GM12878 (cell line): ENCODE measurements at regions of chr10 and their contacts with region 1.

Region 1: DNA sequence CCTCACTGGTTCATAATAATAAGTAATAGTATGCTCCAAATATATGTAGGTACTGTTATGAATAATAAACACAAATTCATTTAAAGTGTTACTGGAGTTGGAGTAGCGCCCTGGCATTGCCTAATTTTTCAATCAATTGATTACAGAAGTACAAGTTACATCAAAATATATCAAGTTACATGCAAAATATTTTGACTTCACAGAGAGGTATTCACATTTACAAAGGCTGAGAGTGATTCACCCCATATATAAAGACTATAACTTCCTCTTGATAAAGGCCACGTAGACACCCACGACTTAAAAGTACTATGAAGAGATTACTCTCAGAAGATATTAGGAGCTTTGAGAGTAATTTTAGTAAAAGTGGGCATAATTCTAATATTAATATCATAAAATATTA is 13.6 kb upstream of the COL17A1 start:
- DNase-seq: no peak
- ATAC-seq: no peak
- H3K4me3 ChIP-seq: no peak overlapping the region
- H3K27ac ChIP-seq: no peak overlapping the region
- H3K4me1 ChIP-seq: no peaks in the 10 kb centered on the region
- H3K27me3 ChIP-seq: no peaks in the 10 kb centered on the region
- CTCF ChIP-seq: no peak
- EP300 ChIP-seq: no peak
- POLR2A ChIP-seq: no peak
- RAD21 ChIP-seq: no peak

Region 2: DNA sequence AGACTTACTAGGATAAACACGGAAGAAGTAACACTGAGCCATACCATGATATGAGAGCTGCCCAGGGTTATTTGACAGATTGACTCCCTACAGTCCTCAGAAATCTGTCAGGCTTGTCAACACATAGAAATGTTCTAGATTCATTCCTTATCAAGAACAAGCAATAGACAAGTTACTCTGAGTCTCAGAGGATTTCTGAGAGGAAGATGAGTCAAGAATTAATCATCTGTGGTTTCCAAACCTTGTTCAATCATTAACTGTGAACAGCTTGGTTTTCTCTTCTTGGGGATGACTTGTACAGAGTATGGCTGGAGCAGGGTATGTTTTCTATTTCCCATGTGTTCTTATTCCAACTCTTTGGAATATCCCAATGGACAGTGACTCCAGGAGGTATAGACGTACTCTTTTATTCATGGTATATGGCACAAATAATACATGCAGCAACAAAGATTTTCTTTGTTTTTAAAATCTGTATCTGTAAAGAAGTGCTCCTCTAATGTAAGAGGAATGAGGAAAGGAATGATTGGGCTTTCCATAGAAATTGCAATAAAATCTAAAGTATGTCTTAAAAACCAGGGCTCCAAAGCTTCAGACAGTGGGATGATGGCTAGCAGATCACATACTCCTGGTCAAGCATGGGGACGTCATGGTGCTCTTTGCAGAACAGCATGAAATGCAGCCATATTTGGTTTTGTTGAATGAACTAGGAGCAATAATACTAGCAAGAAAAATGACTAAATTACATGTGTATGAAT is 10.8 kb after region 1 on chr10:
- CTCF ChIA-PET with region 1: interaction called, 8 read pairs
- POLR2A ChIA-PET with region 1: interaction called, 3 read pairs
- RAD21 ChIA-PET with region 1: interaction called, 3 read pairs
- SMC1A ChIA-PET with region 1: interaction called, 10 read pairs
- in situ Hi-C with region 1: no loop called
- intact Hi-C with region 1: no loop called
- DNase-seq: peak; percentile 40
- ATAC-seq: peak; percentile 97
- H3K4me3 ChIP-seq: no peak overlapping the region
- H3K27ac ChIP-seq: no peak overlapping the region
- H3K4me1 ChIP-seq: no peaks in the 10 kb centered on the region
- H3K27me3 ChIP-seq: no peaks in the 10 kb centered on the region
- CTCF ChIP-seq: no peak
- EP300 ChIP-seq: 0 out of 4 replicates have a peak, but pooled peaks of 1 of the 2 experiments have one; percentile 20
- POLR2A ChIP-seq: no peak
- RAD21 ChIP-seq: no peak